AG04449 (cell line): ENCODE measurements at regions of chr5 and their contacts with region 1.

Region 1: GRCh38 chr5:139765409-139766217 is 30.0 kb upstream of the PSD2 start:
- DNase-seq: no peak
- H3K4me3 ChIP-seq: peak overlapping the region; percentile 72
- CTCF ChIP-seq: peak; percentile 87

Region 2: GRCh38 chr5:139660923-139661814 is 104.4 kb before region 1 on chr5:
- CTCF ChIA-PET with region 1: interaction called, 19 read pairs
- POLR2A ChIA-PET with region 1: no interaction called
- DNase-seq: no peak
- H3K4me3 ChIP-seq: peak overlapping the region; percentile 20
- CTCF ChIP-seq: no peak

Region 3: DNA sequence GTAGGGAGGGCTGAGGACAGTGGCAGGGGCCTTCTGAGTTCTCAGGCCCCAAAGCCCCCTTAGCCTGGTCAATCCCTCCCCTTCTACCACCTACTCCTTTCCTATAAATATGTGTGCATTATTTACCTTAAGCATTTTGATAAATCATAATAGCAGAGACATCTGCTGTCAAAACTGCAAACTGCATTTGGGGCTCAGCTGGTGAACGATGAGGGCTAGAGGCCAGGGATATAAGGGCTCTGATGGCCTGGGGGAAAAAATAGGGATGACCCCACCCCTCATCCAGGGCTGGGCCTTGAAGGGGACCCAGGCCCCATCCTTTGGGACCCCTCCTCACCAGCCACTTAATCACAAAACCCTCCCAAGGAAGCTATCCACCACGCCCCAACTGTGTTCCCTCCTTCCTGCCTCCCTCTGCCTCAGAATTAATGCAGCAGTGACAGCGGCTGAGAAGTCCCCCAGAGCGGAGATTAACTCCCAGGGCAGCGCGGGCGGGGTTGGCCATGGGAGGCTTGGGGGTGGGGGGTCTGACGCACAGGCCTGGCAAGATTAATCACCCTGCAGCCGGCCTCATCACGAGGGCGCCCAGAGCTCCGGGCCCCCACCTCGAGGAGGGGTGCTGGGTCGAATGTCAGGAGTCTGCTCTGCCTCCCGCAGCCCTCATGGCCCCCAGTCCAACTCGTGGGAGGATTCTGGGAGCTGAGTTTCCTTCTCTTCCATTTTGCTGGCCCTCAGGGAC is 75.4 kb before region 1 on chr5:
- CTCF ChIA-PET with region 1: interaction called, 38 read pairs
- POLR2A ChIA-PET with region 1: no interaction called
- DNase-seq: no peak
- H3K4me3 ChIP-seq: no peak overlapping the region
- CTCF ChIP-seq: peak; percentile 38

Region 4: DNA sequence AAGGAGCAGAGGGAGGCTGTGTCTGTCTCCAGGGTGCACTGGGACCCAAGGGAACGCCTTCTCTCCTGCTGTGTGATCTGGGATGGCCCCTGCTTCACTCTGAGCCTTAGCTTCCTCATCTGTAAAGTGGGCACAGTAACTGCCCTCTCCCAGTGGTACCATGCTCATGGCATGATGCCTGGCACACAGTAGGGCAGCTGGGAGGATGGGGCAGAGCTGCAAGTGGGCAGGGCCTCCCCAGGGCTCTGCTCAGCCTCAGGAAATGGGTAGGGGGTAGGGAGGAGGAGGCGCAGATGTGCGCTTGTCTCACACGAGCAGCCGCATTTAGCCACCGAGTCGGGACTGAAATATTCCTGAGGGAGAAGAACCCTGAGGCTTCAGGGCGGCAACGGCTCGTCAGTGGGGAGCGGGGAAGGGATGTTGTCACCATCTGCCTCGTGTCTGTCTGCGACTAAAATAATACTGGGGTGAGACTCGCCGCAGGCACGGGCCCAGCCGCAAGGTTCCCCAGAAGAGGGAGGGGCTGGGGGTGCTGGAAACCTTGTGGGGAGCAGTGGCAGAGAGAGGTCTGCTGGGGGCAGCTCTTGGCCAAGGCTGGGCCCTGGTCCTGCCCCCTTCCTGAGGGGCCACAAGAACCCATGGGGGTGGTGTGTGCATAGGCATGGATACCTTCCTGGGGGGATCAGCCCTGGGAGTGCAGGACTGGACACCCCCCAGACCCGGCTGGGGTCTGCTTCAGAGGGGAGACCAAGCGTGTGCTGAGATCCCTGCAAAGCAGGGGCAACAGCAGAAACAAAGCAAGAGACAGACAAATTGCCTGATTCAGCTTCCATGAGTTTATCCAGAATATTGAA is 25.2 kb before region 1 on chr5:
- CTCF ChIA-PET with region 1: interaction called, 16 read pairs
- POLR2A ChIA-PET with region 1: no interaction called
- DNase-seq: no peak
- H3K4me3 ChIP-seq: no peak overlapping the region
- CTCF ChIP-seq: no peak